ENCODE measurements at regions of chr17 and their contacts with region 1.

Region 1: GRCh38 chr17:28041068-28041843 is 1.2 kb upstream of the NLK start:
- DNase-seq: peak; percentile 97
- ATAC-seq: peak; percentile 92
- H3K4me3 Mint-ChIP-seq: peak overlapping the region; percentile 86
- H3K27ac Mint-ChIP-seq: peak overlapping the region; percentile 91
- H3K4me1 Mint-ChIP-seq: peaks cover 53% of the 10 kb centered on the region
- H3K27me3 Mint-ChIP-seq: peaks cover 2% of the 10 kb centered on the region
- CTCF ChIP-seq: no peak

Region 2: GRCh38 chr17:27630607-27631410 is 410.4 kb before region 1 on chr17 and contains the start of gene LGALS9:
- CTCF ChIA-PET with region 1: no interaction called
- POLR2A ChIA-PET with region 1: no interaction called
- intact Hi-C with region 1: loop called (anchors 5 kb)
- DNase-seq: no peak
- ATAC-seq: peak; percentile 41
- H3K4me3 Mint-ChIP-seq: peak within 1 kb of the TSS; percentile 96
- H3K27ac Mint-ChIP-seq: peak within 1 kb of the TSS; percentile 94
- H3K4me1 Mint-ChIP-seq: peaks cover 50% of the 10 kb centered on the region
- H3K27me3 Mint-ChIP-seq: no peaks in the 10 kb centered on the region
- CTCF ChIP-seq: no peak
- total RNA-seq, gene LGALS9: 76.8 and 79.9 TPM in 2 replicates

Region 3: DNA sequence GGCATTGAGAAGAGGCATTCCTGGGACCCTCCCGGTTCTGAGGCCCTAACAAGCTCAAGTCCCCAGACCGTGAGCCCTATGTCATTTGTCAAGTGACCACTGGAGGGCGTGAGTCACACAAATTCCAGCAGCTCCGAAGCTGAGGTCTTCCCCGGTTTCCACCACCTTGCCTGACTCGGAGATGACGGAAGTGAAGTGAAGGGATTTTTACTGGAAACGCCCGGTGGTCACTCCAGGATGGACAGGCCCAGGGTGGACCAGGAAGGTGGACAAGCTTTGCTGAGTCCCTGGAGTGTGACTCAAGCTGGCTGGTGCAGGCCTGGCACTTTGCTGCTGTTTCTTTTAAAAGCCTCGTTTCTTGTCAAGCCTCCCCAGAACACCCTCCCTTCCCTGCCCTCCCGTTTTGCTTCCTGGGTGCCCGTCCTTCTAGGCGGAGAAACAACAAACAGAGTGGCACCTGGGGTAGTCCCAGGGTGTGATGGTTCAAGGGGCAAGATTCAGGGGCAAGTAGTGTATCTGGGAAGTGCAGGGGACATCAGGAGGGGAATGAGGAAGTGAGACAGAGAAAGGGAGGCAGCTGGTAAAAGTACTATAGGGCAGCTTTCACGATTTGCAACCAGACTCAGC is 235.6 kb before region 1 on chr17:
- CTCF ChIA-PET with region 1: no interaction called
- POLR2A ChIA-PET with region 1: interaction called, 3 read pairs
- intact Hi-C with region 1: loop called (anchors 5 kb)
- DNase-seq: peak; percentile 61
- ATAC-seq: peak; percentile 64
- H3K4me3 Mint-ChIP-seq: peak overlapping the region; percentile 83
- H3K27ac Mint-ChIP-seq: peak overlapping the region; percentile 96
- H3K4me1 Mint-ChIP-seq: peaks cover 50% of the 10 kb centered on the region
- H3K27me3 Mint-ChIP-seq: no peaks in the 10 kb centered on the region
- CTCF ChIP-seq: no peak

Region 4: DNA sequence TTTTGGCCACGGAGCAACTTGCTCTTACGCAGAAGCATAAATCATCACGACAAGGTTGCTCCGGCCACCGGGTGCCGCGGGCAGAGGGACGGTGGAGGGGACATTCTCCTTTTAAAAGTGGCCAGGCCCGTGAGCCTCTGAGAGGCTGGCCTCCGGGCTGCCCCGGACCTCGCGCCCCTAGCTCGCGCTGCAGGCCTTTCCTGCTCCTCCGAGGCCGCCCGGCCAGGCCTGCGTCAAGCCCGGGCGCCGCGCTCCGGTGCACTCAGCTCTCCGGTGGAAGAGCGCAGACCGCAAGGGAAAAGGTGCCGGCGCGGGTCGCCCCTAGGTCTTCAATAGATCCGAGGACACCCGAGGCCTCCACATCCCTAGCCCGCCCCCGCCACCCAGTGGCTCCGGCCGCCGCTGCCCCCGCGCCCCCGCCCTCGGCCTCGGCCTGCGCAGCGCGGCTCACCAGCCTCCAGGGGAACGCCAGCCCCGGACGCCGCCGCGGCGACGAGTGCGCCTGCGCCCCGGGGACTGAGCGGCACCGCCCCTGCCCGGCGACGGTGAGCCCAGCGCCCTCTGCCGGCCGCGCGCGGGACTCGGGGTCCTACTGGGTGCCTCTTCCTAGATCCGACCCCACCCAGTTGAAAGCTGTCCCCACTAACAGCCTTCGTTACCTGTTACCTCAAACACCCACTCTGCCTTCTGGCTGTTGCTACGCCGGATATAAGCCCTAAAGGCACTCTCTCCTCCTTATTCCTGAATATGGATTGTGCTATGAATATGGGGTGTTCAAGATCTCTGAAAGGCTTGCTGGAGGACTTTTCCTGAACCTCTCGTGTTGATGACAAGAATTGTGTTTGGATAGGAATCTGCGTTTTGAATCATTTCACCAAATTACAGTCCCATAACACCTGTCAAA is 148.1 kb before region 1 on chr17 and contains the start of gene LYRM9:
- CTCF ChIA-PET with region 1: no interaction called
- POLR2A ChIA-PET with region 1: interaction called, 7 read pairs
- intact Hi-C with region 1: loop called (anchors 1 kb)
- DNase-seq: peak; percentile 97
- ATAC-seq: peak; percentile 96
- H3K4me3 Mint-ChIP-seq: peak within 1 kb of the TSS; percentile 84
- H3K27ac Mint-ChIP-seq: peak within 1 kb of the TSS; percentile 69
- H3K4me1 Mint-ChIP-seq: peaks cover 17% of the 10 kb centered on the region
- H3K27me3 Mint-ChIP-seq: no peaks in the 10 kb centered on the region
- CTCF ChIP-seq: peak; percentile 91
- total RNA-seq, gene LYRM9: 7.2 and 7.5 TPM in 2 replicates

Region 5: GRCh38 chr17:28057731-28058279 is 16.5 kb after region 1 on chr17:
- CTCF ChIA-PET with region 1: no interaction called
- POLR2A ChIA-PET with region 1: interaction called, 13 read pairs
- intact Hi-C with region 1: no loop called
- DNase-seq: no peak
- ATAC-seq: peak; percentile 49
- H3K4me3 Mint-ChIP-seq: no peak overlapping the region
- H3K27ac Mint-ChIP-seq: peak overlapping the region; percentile 53
- H3K4me1 Mint-ChIP-seq: peaks cover 45% of the 10 kb centered on the region
- H3K27me3 Mint-ChIP-seq: no peaks in the 10 kb centered on the region
- CTCF ChIP-seq: no peak

Region 6: DNA sequence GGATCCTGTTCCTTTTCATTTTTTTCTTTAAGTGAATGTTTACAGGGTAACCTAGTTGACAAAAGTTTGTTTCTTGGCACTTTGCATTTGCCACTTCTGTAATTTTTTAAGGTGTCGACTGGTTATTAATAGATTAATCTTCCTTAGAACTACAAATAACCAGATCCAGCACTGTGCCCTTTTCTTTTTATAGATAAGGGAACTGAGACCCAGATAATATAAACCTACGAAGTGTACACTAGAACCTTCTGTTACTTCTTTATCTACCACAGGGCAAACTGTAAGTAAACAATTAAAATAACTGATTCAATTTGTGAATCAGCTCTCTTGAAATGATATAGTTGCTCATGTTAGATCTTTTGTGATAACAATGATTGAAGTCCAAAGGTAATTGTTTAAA is 56.6 kb after region 1 on chr17:
- CTCF ChIA-PET with region 1: no interaction called
- POLR2A ChIA-PET with region 1: interaction called, 3 read pairs
- intact Hi-C with region 1: loop called (anchors 10 kb)
- DNase-seq: no peak
- ATAC-seq: peak; percentile 84
- H3K4me3 Mint-ChIP-seq: peak overlapping the region; percentile 41
- H3K27ac Mint-ChIP-seq: peak overlapping the region; percentile 68
- H3K4me1 Mint-ChIP-seq: peaks cover 61% of the 10 kb centered on the region
- H3K27me3 Mint-ChIP-seq: no peaks in the 10 kb centered on the region
- CTCF ChIP-seq: no peak

Region 7: GRCh38 chr17:28318759-28319660 is 277.8 kb after region 1 on chr17 and contains the start of gene TMEM97:
- CTCF ChIA-PET with region 1: no interaction called
- POLR2A ChIA-PET with region 1: no interaction called
- intact Hi-C with region 1: loop called (anchors 10 kb)
- DNase-seq: peak; percentile 85
- ATAC-seq: peak; percentile 98
- H3K4me3 Mint-ChIP-seq: peak within 1 kb of the TSS; percentile 90
- H3K27ac Mint-ChIP-seq: peak within 1 kb of the TSS; percentile 76
- H3K4me1 Mint-ChIP-seq: peaks cover 25% of the 10 kb centered on the region
- H3K27me3 Mint-ChIP-seq: no peaks in the 10 kb centered on the region
- CTCF ChIP-seq: no peak
- total RNA-seq, gene TMEM97: 16.1 and 17.6 TPM in 2 replicates